ENCODE measurements at regions of chr2 and their contacts with region 1.

Region 1: DNA sequence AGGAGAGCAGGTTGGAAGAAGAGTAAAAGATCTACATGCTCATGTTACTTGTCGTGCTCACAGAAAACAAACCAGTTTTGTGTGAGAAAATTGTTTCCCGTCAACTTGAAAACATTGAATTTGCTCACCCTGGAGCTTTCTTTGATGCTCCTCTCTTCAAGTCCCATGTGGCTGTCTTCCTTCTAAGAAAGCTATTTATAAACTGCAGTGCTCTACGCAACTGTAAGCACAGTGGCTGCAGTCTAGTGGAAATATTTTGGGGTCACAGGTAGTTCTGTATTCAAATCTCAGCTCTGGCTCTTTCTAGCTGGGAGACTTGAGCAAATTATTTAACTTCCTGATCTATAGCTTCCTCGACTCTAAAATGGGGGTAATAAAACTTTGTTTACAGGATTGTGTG is 211.8 kb downstream of the PLCL1 start:
- DNase-seq: no peak
- ATAC-seq: peak; percentile 21; the same call in 2 of the 3 replicates
- H3K4me3 ChIP-seq: no peak overlapping the region
- H3K27ac ChIP-seq: no peak overlapping the region
- H3K4me1 ChIP-seq: peaks cover 5% of the 10 kb centered on the region; the same call in 1 of the 2 replicates
- H3K27me3 ChIP-seq: no peaks in the 10 kb centered on the region
- CTCF ChIP-seq: no peak
- EP300 ChIP-seq: no peak
- POLR2A ChIP-seq: no peak
- RAD21 ChIP-seq: no peak

Region 2: DNA sequence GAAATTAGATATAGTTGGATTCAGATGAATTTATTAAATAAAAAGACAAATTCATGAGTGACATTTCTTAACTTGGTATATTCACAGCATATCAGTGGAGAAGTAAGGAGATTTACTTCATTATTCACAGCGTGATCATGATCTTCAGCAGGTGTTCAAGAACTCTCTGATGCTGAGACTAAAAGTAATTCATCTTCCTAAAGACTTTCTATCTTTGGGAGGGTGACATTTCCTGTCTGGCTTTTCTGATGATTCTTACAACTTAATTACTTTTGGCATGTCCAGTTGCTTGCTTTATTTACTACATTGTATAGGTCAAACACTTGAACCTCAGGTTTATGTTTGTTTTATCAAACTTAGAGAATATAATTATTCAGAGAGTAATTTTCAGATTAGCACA is 12.7 kb after region 1 on chr2:
- CTCF ChIA-PET with region 1: interaction called, 4 read pairs
- POLR2A ChIA-PET with region 1: interaction called, 3 read pairs
- RAD21 ChIA-PET with region 1: no interaction called
- SMC1A ChIA-PET with region 1: interaction called, 16 read pairs
- in situ Hi-C with region 1: no loop called
- intact Hi-C with region 1: no loop called
- DNase-seq: no peak
- ATAC-seq: no peak
- H3K4me3 ChIP-seq: no peak overlapping the region
- H3K27ac ChIP-seq: no peak overlapping the region
- H3K4me1 ChIP-seq: no peaks in the 10 kb centered on the region
- H3K27me3 ChIP-seq: no peaks in the 10 kb centered on the region; a peak in 1 of 4 replicates
- CTCF ChIP-seq: no peak
- EP300 ChIP-seq: no peak
- POLR2A ChIP-seq: no peak
- RAD21 ChIP-seq: no peak

Region 3: GRCh38 chr2:198073253-198073652 is 57.0 kb after region 1 on chr2:
- CTCF ChIA-PET with region 1: no interaction called
- POLR2A ChIA-PET with region 1: no interaction called
- RAD21 ChIA-PET with region 1: no interaction called
- SMC1A ChIA-PET with region 1: no interaction called
- in situ Hi-C with region 1: no loop called
- intact Hi-C with region 1: no loop called
- DNase-seq: no peak
- ATAC-seq: no peak
- H3K4me3 ChIP-seq: no peak overlapping the region
- H3K27ac ChIP-seq: no peak overlapping the region
- H3K4me1 ChIP-seq: no peaks in the 10 kb centered on the region
- H3K27me3 ChIP-seq: no peaks in the 10 kb centered on the region
- CTCF ChIP-seq: no peak
- EP300 ChIP-seq: no peak
- POLR2A ChIP-seq: no peak
- RAD21 ChIP-seq: no peak